ENCODE measurements at regions of chr5 and their contacts with region 1.

Region 1: DNA sequence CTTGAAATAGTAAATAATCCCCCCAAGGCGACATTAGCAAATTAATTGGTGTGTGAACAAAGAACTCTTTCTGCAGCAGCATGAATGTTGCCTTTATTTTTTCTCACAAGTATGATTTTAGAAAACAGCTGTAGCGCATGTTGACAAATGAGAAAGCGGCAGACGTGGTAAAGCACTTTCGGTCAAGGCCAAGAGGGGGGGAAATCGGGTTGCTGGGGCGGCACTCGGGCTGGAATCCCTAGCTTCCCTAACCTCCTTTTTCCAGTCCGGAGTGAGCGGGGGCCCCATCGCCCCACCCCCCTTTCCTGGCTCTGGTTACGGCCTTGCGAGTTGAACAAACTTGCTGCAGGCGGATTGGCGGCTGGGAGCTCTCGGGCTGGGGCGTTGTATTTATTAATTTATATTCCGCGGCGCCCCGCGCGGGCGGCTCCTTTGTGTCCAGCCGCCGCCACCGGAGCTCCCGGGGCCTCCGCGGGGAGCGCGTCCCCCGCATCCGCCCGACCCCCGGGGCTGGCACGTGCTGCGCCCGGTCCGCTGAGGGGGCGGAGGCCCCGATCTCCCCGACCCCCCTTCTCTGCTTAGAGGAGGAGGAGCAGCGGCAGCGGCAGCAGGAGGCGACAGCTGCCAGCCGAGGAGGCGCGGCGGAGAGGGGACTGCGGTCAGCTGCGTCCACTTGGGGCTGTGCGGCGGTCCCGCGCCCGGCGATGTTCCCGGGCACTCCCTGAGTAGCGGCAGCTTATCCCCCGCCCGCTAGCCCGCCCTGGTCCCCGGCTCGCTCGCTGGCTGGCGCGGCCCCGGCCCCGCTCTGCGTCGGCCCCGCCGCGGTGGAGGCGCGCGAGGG is at the start of gene RHOBTB3:
- DNase-seq: peak; percentile 89
- ATAC-seq: peak; percentile 85
- H3K4me3 Mint-ChIP-seq: peak within 1 kb of the TSS; percentile 87
- H3K27ac Mint-ChIP-seq: peak within 1 kb of the TSS; percentile 59; the same call in 1 of the 2 replicates
- H3K4me1 Mint-ChIP-seq: peaks cover 48% of the 10 kb centered on the region
- H3K27me3 Mint-ChIP-seq: peaks cover 66% of the 10 kb centered on the region
- CTCF ChIP-seq: no peak
- total RNA-seq, gene RHOBTB3: 9.9 to 13.8 TPM (median 11.2 TPM) in 3 replicates

Region 2: GRCh38 chr5:95712347-95712958 is 18.5 kb before region 1 on chr5:
- CTCF ChIA-PET with region 1: interaction called, 3 read pairs
- POLR2A ChIA-PET with region 1: interaction called, 19 read pairs
- DNase-seq: no peak
- ATAC-seq: no peak
- H3K4me3 Mint-ChIP-seq: peak overlapping the region; percentile 48
- H3K27ac Mint-ChIP-seq: no peak overlapping the region
- H3K4me1 Mint-ChIP-seq: peaks cover 20% of the 10 kb centered on the region
- H3K27me3 Mint-ChIP-seq: peaks cover 40% of the 10 kb centered on the region
- CTCF ChIP-seq: no peak

Measured in WTC11 (cell line).